B cell (primary cell): ENCODE measurements at regions of chr11 and their contacts with region 1.

Region 1: GRCh38 chr11:114262681-114263512 is 33.3 kb upstream of the NNMT start:
- DNase-seq: peak; percentile 64
- ATAC-seq: no peak
- H3K4me3 ChIP-seq: no peak overlapping the region
- H3K4me3 Mint-ChIP-seq: no peak overlapping the region
- H3K27ac ChIP-seq: no peak overlapping the region
- H3K27ac Mint-ChIP-seq: no peak overlapping the region
- H3K4me1 ChIP-seq: peaks cover 30 to 31% of the 10 kb centered on the region in 2 donors
- H3K4me1 Mint-ChIP-seq: peaks cover 29% of the 10 kb centered on the region
- H3K27me3 ChIP-seq: peaks cover 0 to 3% (median 1%) of the 10 kb centered on the region in 4 experiments
- H3K27me3 Mint-ChIP-seq: no peaks in the 10 kb centered on the region
- CTCF ChIP-seq: peak; percentile 76

Region 2: DNA sequence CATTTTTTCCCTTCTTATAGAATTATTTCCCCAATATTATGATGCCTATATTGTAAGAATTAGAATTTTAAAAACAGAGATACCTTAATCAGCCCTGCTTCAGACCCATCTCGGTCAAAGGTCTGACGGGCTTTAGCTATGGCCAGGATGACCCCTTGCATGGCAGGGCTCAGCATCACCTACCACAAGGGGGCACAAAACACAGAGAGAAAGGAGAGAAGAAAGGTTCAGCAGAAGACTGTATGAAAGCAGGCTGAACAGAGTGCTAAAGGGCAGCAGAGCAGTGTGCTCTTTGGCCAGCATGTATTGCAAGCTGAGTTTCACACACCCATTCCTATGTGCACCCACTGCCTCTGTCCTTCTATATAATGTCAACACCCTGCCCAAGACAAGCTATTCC is 456.5 kb before region 1 on chr11:
- CTCF ChIA-PET with region 1: interaction called, 207 read pairs
- POLR2A ChIA-PET with region 1: no interaction called
- intact Hi-C with region 1: loop called (anchors 1 kb)
- DNase-seq: peak; percentile 56
- ATAC-seq: peak; percentile 70
- H3K4me3 ChIP-seq: no peak overlapping the region
- H3K4me3 Mint-ChIP-seq: no peak overlapping the region
- H3K27ac ChIP-seq: no peak overlapping the region
- H3K27ac Mint-ChIP-seq: peak overlapping the region; percentile 77
- H3K4me1 ChIP-seq: no peaks in the 10 kb centered on the region
- H3K4me1 Mint-ChIP-seq: peaks cover 4% of the 10 kb centered on the region
- H3K27me3 ChIP-seq: no peaks in the 10 kb centered on the region
- H3K27me3 Mint-ChIP-seq: no peaks in the 10 kb centered on the region
- CTCF ChIP-seq: peak; percentile 58

Region 3: DNA sequence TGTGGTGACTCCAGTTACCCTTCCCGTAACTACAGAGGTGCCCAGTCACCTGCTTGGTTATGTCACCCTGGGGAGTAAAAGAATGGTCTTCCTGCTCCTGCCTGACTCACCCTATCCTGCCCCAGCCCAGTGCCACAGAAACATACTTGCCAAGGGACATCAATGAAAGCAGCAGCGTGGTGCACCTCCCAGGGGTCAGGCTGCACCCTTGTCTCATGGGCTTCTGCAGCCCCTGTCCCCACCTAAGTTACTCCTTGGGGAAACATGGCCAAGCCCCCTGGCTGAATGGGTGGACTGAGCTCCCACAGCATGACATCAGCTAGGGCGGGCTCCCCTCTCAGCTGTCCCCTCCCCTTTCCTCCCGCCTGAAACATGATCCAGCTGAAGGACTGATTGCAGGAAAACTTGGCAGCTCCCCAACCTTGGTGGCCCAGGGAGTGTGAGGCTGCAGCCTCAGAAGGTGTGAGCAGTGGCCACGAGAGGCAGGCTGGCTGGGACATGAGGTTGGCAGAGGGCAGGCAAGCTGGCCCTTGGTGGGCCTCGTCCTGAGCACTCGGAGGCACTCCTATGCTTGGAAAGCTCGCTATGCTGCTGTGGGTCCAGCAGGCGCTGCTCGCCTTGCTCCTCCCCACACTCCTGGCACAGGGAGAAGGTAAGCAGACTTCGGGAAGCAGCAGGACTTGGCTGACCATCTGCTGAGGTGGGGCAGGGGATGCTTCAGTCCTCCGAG is 288.0 kb before region 1 on chr11 and contains the start of gene HTR3A:
- CTCF ChIA-PET with region 1: interaction called, 55 read pairs
- POLR2A ChIA-PET with region 1: interaction called, 5 read pairs
- intact Hi-C with region 1: loop called (anchors 1 kb)
- DNase-seq: peak; percentile 16
- ATAC-seq: no peak
- H3K4me3 ChIP-seq: no peak within 1 kb of the TSS
- H3K4me3 Mint-ChIP-seq: peak within 1 kb of the TSS; percentile 48
- H3K27ac ChIP-seq: peak within 1 kb of the TSS in 1 of 2 donors; percentile 29
- H3K27ac Mint-ChIP-seq: peak within 1 kb of the TSS; percentile 91
- H3K4me1 ChIP-seq: peaks cover 56 to 77% of the 10 kb centered on the region in 2 donors
- H3K4me1 Mint-ChIP-seq: peaks cover 66% of the 10 kb centered on the region
- H3K27me3 ChIP-seq: no peaks in the 10 kb centered on the region
- H3K27me3 Mint-ChIP-seq: no peaks in the 10 kb centered on the region
- CTCF ChIP-seq: no peak
- total RNA-seq, gene HTR3A: 13.8 and 16.1 TPM in 2 replicates

Region 4: DNA sequence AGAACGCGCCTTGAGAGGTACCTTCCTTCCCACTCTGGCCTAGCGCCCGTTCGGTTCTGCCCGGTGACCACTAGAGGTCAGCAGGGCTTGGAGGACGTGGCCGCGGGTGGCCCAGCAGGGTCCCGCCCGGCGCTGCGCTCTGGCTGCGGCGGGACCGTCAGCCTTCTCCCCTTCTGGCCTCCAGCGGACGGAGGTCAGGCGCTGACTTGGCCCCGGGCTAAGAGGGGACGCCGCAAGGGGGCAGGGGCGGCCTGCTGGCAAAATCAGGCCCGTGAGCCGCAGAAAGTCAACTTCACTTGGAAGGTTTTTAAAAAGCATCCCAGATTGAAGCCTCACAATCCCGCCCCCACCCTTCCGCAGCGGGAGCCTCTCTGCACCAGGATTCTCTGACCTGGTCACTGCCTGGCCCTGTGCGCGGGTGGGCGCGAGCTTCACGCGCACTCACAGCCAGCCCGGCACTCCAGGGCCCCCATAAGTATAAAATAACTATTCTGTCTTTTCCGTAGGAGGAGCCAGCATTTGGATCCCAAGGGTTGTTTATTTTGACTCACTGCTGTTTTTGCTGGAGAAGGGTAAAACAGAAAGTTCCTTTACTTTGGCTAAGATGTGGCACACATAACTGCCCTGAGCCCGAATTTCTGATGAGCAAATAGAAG is 226.6 kb before region 1 on chr11:
- CTCF ChIA-PET with region 1: interaction called, 391 read pairs
- POLR2A ChIA-PET with region 1: interaction called, 4 read pairs
- intact Hi-C with region 1: loop called (anchors 1 kb)
- DNase-seq: peak; percentile 72
- ATAC-seq: peak; percentile 93
- H3K4me3 ChIP-seq: peak overlapping the region in 3 of 5 experiments; percentile 18 to 48 (median 22)
- H3K4me3 Mint-ChIP-seq: no peak overlapping the region
- H3K27ac ChIP-seq: no peak overlapping the region
- H3K27ac Mint-ChIP-seq: no peak overlapping the region
- H3K4me1 ChIP-seq: peaks cover 0 to 12% of the 10 kb centered on the region in 2 donors
- H3K4me1 Mint-ChIP-seq: peaks cover 7% of the 10 kb centered on the region
- H3K27me3 ChIP-seq: peaks cover 0 to 17% (median 4%) of the 10 kb centered on the region in 4 experiments
- H3K27me3 Mint-ChIP-seq: peaks cover 28% of the 10 kb centered on the region
- CTCF ChIP-seq: peak; percentile 69

Region 5: GRCh38 chr11:114140826-114141225 is 122.1 kb before region 1 on chr11:
- CTCF ChIA-PET with region 1: interaction called, 10 read pairs
- POLR2A ChIA-PET with region 1: no interaction called
- intact Hi-C with region 1: no loop called
- DNase-seq: no peak
- ATAC-seq: no peak
- H3K4me3 ChIP-seq: no peak overlapping the region
- H3K4me3 Mint-ChIP-seq: no peak overlapping the region
- H3K27ac ChIP-seq: no peak overlapping the region
- H3K27ac Mint-ChIP-seq: no peak overlapping the region
- H3K4me1 ChIP-seq: peaks cover 51 to 57% of the 10 kb centered on the region in 2 donors
- H3K4me1 Mint-ChIP-seq: peaks cover 52% of the 10 kb centered on the region
- H3K27me3 ChIP-seq: peaks cover 0 to 4% (median 1%) of the 10 kb centered on the region in 4 experiments
- H3K27me3 Mint-ChIP-seq: peaks cover 40% of the 10 kb centered on the region
- CTCF ChIP-seq: no peak

Region 6: DNA sequence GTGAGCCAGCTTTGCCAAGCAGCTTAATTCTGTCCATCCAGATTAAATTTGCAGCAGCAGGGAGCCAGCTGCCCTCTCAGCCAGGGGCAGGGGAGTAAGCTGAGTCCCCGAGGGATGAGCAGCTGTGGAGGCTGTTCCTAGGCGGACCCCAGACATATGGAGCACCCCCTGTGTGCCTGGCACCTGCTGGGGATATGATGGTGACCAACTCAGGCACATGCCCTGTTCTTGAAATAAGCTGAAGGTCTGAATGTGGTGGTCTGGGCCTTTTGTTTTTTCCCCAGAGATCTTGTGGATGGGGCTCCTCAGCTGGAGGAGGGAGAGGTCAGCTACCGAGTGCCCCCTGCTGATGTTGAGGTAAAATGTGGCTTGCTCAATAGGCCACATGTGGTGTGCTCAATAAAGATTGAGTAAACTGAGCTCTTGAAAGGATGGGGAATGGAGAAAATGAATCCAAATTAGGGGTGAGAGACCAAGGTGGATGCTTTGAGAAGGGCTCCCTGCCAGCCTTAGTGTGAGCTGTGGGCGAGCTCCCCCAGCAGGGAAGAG is 70.0 kb before region 1 on chr11:
- CTCF ChIA-PET with region 1: interaction called, 81 read pairs
- POLR2A ChIA-PET with region 1: no interaction called
- intact Hi-C with region 1: no loop called
- DNase-seq: no peak
- ATAC-seq: no peak
- H3K4me3 ChIP-seq: no peak overlapping the region
- H3K4me3 Mint-ChIP-seq: no peak overlapping the region
- H3K27ac ChIP-seq: no peak overlapping the region
- H3K27ac Mint-ChIP-seq: no peak overlapping the region
- H3K4me1 ChIP-seq: peaks cover 42 to 66% of the 10 kb centered on the region in 2 donors
- H3K4me1 Mint-ChIP-seq: peaks cover 60% of the 10 kb centered on the region
- H3K27me3 ChIP-seq: no peaks in the 10 kb centered on the region
- H3K27me3 Mint-ChIP-seq: no peaks in the 10 kb centered on the region
- CTCF ChIP-seq: no peak